Dendritic cell treated with granulocyte-macrophage colony-stimulating factor and Interleukin-4, amounts not matched to agents 40 ng/mL and 50 ng/mL, for 4 days (primary cell): ENCODE measurements at regions of chr19 and their contacts with region 1.

Region 1: DNA sequence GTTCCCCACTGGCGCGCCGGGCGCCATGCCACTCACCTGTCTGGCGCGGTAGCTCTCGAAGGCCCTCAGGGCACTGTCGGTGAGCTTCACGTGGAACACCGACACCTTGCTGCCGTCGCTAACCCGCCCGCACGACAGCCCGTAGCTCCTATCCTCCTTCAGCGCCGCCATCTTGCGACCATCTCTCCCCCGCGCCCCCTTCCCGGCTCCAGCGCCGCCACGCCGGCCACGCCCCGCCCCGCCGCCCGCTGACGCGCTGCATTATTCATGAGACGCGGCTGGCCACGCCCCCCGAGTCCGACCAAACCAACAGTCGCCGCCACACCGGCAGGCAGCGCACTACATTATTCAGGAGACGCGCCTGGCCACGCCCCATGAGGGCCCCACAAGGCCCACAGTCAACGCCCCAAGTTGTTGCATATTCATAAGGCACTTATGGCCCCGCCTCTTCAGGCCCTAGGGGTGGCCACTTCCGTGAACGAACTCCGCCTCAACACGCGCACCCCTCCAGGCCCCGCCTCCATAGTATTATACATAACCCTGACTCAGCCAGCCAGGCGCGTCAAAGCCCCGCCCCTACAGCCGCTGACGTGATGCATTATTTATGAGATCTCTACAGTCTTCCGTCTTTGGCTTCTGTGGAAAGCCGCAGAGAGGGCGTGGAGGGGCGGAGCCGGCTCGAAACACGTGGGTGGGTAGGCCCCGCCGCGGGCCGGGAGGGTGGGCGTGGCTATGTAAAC is at the start of gene ELL:
- H3K4me3 Mint-ChIP-seq: peak within 1 kb of the TSS; percentile 90
- H3K27ac Mint-ChIP-seq: peak within 1 kb of the TSS; percentile 88
- H3K4me1 Mint-ChIP-seq: peaks cover 40% of the 10 kb centered on the region
- H3K27me3 Mint-ChIP-seq: no peaks in the 10 kb centered on the region

Region 2: DNA sequence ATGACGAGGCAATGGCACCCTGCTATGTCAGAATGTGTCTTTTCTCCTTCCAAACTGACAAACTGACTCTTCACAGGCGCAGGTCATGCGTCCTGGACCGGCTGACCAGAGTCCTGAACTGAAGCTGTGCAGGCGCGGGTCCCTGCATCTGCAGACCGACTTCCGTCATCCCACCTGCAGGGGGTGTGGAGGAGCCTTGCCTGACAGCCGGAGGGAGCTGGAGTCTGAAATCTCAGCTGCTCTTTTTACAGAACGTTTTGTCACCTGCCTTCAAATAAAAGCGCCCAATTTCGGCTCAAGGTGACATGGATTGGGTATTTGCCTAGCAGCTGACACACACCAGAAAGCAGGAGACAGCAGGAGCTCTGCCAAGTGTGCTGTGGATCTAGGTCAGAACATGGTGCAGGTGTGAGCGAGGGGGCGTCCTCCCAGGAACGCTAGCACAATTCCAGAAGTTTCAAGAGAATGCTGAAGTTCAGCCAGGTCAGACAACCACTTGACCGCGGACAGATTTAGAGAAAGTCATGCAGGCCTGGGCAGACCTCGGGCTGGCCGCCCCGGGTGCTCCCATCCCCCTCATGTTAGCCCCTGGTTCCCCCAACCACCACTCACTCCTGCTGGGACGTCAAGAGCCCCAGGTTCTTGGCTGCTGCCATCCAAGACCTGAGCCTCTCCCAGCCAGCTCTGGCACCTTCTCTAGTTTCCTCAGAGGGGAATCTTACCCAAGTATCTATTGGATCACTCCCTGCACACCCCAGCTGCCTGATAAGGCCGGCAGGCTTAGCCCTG is 33.0 kb before region 1 on chr19:
- intact Hi-C with region 1: loop called (anchors 5 kb)
- H3K4me3 Mint-ChIP-seq: no peak overlapping the region
- H3K27ac Mint-ChIP-seq: peak overlapping the region; percentile 8
- H3K4me1 Mint-ChIP-seq: peaks cover 91% of the 10 kb centered on the region
- H3K27me3 Mint-ChIP-seq: no peaks in the 10 kb centered on the region

Region 3: GRCh38 chr19:18542936-18543815 is 21.1 kb after region 1 on chr19 and contains the start of gene FKBP8:
- intact Hi-C with region 1: loop called (anchors 1 kb)
- H3K4me3 Mint-ChIP-seq: peak within 1 kb of the TSS; percentile 83
- H3K27ac Mint-ChIP-seq: peak within 1 kb of the TSS; percentile 92
- H3K4me1 Mint-ChIP-seq: peaks cover 41% of the 10 kb centered on the region
- H3K27me3 Mint-ChIP-seq: no peaks in the 10 kb centered on the region

Region 4: DNA sequence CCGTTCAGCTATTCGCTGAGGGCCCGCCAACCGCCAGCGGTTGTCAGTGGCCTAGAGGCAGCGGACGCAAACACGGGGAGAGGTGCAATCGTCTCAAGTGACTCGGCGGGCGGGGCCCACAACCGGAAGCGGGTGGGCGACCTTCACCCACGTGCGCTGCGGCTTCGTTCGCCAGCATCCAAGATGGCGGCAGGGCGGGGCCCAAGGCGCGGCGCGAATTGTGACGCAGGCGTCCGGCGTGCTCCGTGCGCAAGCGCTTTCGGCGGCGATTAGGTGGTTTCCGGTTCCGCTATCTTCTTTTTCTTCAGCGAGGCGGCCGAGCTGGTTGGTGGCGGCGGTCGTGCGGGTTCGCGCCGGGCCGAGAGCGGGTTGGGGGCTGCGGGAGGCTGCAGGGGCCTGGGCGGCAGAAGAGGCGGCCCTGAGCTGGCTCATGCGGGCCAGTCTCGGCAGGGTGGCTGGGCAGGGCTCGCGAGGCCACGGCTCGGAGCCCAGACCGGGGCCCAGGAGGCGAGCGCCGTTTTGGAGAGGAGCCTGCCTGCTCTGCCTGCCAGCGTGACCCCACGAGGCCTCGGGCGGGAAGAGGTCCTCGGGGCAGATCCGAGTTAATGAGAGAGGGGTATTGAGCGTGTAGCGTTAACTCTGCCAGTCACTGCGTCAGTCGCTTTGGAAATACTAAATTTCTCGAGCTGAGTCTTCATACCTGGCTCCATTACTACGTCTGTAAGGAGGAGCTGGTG is 49.7 kb after region 1 on chr19 and contains the start of gene UBA52:
- intact Hi-C with region 1: loop called (anchors 1 kb)
- H3K4me3 Mint-ChIP-seq: peak within 1 kb of the TSS; percentile 78
- H3K27ac Mint-ChIP-seq: peak within 1 kb of the TSS; percentile 95
- H3K4me1 Mint-ChIP-seq: peaks cover 25% of the 10 kb centered on the region
- H3K27me3 Mint-ChIP-seq: no peaks in the 10 kb centered on the region

Region 5: DNA sequence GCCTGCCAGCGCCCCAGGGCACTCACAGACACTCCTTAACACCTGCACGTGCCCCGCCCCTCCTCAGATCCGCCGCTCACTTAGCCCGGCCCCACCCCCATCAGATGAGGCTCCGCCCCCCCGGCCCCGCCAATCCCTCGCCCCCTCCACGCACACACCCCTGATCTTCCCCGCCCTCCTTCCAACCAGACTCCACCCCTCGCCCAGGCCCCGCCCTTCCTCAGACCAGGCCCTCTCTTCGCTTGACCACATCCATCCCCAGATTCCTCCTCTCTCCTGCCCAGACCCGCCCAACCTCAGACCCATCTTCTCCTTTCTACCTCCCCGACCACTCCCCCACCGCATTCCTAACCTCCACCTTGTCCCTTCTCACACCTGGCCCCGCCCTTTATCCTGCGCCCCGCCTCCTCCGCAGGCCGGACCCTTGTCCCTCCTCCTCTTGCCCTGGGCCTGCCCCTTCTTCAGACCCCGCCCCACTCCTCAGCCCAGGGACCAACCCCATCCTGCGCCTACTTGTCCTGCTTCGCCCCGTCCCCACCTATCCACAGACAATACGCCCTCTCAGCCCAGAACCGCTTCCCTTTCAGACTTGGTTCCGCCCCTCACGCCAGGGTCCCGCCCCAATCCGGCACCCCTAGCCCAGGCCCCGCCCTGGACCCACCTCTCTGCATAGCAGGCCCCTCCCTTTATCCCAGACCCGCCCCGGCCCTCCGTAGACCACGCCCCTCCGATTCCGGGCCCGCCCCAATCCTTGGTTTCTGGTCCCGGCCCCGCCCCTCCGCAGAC is 114.3 kb after region 1 on chr19:
- intact Hi-C with region 1: loop called (anchors 1 kb)
- H3K4me3 Mint-ChIP-seq: peak overlapping the region; percentile 87
- H3K27ac Mint-ChIP-seq: peak overlapping the region; percentile 88
- H3K4me1 Mint-ChIP-seq: peaks cover 40% of the 10 kb centered on the region
- H3K27me3 Mint-ChIP-seq: peaks cover 24% of the 10 kb centered on the region